AG04450 (cell line): ENCODE measurements at regions of chr3 and their contacts with region 1.

Region 1: GRCh38 chr3:50600841-50601591 is 10.6 kb downstream of the CISH start:
- DNase-seq: peak; percentile 89
- H3K4me3 ChIP-seq: peak overlapping the region; percentile 34
- H3K27ac ChIP-seq: peak overlapping the region; percentile 100
- H3K27me3 ChIP-seq: no peaks in the 10 kb centered on the region
- CTCF ChIP-seq: no peak

Region 2: DNA sequence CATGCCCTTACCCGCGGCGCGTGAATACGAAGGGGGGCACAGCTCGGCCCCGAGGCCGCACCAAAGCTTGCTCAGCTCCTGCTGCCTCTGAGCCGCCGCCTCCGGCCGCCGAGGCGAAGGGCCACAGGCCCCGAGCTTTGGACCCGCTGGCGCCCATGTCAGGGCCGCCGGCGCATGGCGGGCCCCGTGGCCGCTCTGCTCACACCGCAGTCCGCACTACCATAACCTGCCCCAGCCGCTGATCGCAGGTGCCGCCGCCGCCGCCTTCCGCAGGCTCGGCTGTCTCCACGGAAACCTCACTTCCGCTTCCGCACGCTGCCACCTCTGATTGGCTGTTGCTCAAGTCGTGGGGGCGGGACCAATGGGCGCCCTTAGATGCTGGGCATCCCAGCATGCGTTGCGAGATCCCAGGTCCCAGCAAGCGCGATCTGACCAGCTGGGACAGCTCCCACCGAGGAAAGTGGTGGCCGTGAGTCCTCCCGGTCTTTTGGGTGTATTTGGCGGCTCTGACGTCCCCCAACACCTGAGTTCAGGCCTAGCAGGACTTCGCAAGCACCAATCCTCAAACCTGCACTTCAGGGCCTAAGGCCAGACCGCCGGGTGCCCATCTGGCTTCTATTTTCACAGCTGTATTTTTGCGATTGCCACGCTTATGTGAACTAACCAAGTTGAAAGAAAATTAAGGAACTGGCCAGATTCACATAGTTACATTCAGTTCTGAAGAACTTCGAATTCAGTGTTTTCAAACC is 272.9 kb before region 1 on chr3 and contains the start of gene TUSC2:
- CTCF ChIA-PET with region 1: no interaction called
- POLR2A ChIA-PET with region 1: no interaction called
- DNase-seq: peak; percentile 82
- H3K4me3 ChIP-seq: peak within 1 kb of the TSS; percentile 87
- H3K27ac ChIP-seq: peak within 1 kb of the TSS; percentile 73
- H3K27me3 ChIP-seq: no peaks in the 10 kb centered on the region
- CTCF ChIP-seq: no peak
- polyA plus RNA-seq, gene TUSC2: 25.3 and 28.1 TPM in 2 replicates

Region 3: DNA sequence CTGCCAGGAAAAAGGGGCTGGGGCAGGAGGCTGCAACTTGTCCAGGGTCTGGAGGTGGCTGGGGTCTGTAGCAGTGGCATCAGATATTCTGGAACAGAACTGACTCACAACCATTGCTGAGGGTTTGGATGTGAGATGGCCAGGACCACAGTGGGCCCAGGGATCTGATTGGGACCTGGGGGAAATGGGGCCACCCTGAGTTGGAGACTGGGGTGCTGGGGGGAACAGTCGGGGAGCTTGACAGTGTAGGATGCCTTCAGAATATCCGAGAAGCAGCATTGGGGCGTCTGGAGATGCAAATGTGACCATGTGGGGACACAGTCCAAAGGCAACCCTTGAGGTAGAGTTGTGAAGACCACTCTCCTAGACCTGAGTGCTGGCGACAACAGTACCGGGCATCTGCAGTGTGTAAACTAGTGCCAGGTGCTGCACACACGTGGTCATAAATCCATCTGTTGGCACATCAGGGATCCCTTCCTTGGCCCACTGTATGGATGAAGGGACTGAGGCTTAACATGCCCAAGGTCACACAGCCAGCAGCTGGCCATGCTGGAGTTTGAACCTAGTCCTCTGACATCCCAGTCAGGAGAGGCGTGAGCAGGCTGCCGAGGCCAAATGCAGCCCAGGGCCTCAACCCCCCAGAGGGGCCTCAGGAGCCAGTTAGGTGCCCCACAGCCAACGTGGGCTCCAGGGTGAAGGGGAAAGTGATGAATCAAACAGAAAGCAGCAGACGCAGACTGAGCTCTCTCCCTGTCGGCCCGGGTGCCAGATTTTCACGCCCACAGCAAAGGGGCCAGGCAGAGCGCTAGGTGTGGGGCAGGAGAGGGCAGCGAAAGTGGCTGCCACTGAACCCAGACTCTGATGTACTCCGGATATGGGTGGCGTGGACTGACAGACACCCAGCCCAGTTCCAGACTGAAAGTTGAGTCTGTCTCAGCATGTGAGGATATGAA is 12.9 kb before region 1 on chr3:
- CTCF ChIA-PET with region 1: no interaction called
- POLR2A ChIA-PET with region 1: interaction called, 21 read pairs
- DNase-seq: no peak
- H3K4me3 ChIP-seq: no peak overlapping the region
- H3K27ac ChIP-seq: no peak overlapping the region
- H3K27me3 ChIP-seq: no peaks in the 10 kb centered on the region
- CTCF ChIP-seq: no peak

Region 4: GRCh38 chr3:50623840-50624474 is 22.9 kb after region 1 on chr3:
- CTCF ChIA-PET with region 1: no interaction called
- POLR2A ChIA-PET with region 1: no interaction called
- DNase-seq: no peak
- H3K4me3 ChIP-seq: no peak overlapping the region
- H3K27ac ChIP-seq: no peak overlapping the region
- H3K27me3 ChIP-seq: no peaks in the 10 kb centered on the region
- CTCF ChIP-seq: no peak